PC-3 (cell line): ENCODE measurements at regions of chr7 and their contacts with region 1.

Region 1: GRCh38 chr7:112001089-112001826 is 204.9 kb downstream of the DOCK4 start:
- DNase-seq: peak; percentile 85
- ATAC-seq: peak; percentile 98
- H3K4me3 ChIP-seq: peak overlapping the region; percentile 9; the same call in 1 of the 2 replicates
- H3K27ac ChIP-seq: peak overlapping the region; percentile 88
- H3K4me1 ChIP-seq: peaks cover 25% of the 10 kb centered on the region
- H3K27me3 ChIP-seq: no peaks in the 10 kb centered on the region
- CTCF ChIP-seq: no peak

Region 2: GRCh38 chr7:111820621-111821020 is 180.6 kb before region 1 on chr7:
- CTCF ChIA-PET with region 1: no interaction called
- POLR2A ChIA-PET with region 1: no interaction called
- intact Hi-C with region 1: no loop called
- DNase-seq: no peak
- ATAC-seq: no peak
- H3K4me3 ChIP-seq: no peak overlapping the region
- H3K27ac ChIP-seq: no peak overlapping the region
- H3K4me1 ChIP-seq: no peaks in the 10 kb centered on the region
- H3K27me3 ChIP-seq: no peaks in the 10 kb centered on the region
- CTCF ChIP-seq: no peak

Region 3: GRCh38 chr7:111931016-111931517 is 70.2 kb before region 1 on chr7:
- CTCF ChIA-PET with region 1: no interaction called
- POLR2A ChIA-PET with region 1: no interaction called
- intact Hi-C with region 1: loop called (anchors 1 kb)
- DNase-seq: peak; percentile 90
- ATAC-seq: peak; percentile 93
- H3K4me3 ChIP-seq: no peak overlapping the region
- H3K27ac ChIP-seq: peak overlapping the region; percentile 94
- H3K4me1 ChIP-seq: peaks cover 21% of the 10 kb centered on the region
- H3K27me3 ChIP-seq: no peaks in the 10 kb centered on the region
- CTCF ChIP-seq: no peak

Region 4: DNA sequence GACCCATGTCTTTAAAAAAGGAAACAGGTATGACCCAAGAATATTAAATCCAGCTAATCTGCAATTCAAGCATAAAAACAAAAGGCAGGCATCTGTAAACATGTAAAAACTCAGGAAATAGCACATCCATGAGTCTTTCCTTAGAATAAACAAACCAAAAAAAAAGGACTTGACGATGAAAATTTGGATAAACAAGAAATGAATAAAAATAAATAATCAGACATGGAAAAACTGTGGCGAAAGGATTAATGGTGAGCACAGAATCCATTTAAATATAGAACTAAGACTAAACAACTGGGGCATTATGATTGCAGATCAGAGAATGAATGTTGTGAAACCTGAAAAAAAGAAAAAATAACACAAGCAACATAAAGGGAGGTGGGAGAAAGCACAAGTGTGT is 34.8 kb after region 1 on chr7:
- CTCF ChIA-PET with region 1: no interaction called
- POLR2A ChIA-PET with region 1: no interaction called
- intact Hi-C with region 1: loop called (anchors 1 kb)
- DNase-seq: peak; percentile 46
- ATAC-seq: peak; percentile 77
- H3K4me3 ChIP-seq: 0 out of 2 replicates have a peak overlapping the region, but pooled peaks have one; percentile 19
- H3K27ac ChIP-seq: peak overlapping the region; percentile 49
- H3K4me1 ChIP-seq: peaks cover 18% of the 10 kb centered on the region
- H3K27me3 ChIP-seq: no peaks in the 10 kb centered on the region
- CTCF ChIP-seq: no peak